H1 (cell line): ENCODE measurements at regions of chr17 and their contacts with region 1.

Region 1: DNA sequence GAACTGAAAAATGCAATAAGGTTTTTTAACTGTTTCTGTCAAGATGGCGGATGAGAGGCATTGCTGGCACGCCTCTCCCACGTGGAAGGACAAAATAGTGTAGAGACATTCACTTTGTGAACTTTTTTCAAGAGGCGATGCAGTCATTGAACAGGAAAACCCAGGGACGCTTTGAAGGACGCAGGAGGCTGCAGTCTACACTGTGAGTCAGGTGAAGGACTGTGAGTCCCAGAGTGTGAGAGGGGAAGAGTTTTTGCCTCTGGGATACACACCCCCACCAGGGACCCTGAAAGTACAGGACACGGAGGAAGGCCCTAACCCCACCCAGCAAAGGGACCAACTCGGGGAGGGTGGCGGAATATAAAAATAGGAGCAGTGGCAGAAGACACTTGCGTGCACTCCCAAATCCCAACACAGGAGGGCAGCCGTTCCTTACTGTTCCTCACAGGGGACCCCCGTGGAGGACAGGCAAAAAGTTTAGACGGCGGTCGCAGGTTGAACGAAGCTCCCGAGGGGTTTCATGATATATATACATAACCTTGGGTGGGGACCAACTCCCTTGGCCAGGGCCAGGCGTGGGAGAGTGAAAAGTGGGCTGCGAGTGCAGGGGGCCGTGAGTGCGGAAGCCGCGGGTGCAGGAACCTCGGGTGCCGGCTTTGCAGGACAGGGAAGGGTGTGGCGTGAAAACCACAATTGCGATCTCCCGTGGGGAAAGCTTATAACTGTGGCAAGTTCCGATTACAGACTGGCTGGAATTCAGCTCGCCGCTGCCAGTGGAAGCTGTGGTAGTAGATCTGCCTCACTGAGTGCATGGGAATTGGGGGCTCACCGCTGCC is 82.0 kb upstream of the ALOX12 start:
- DNase-seq: peak; percentile 34 to 88
- H3K4me3 ChIP-seq: no peak overlapping the region
- H3K27ac ChIP-seq: no peak overlapping the region
- H3K4me1 ChIP-seq: no peaks in the 10 kb centered on the region
- H3K27me3 ChIP-seq: no peaks in the 10 kb centered on the region; a peak in 2 of 7 replicates
- CTCF ChIP-seq: peak; percentile 68 to 81 (median 77)
- EP300 ChIP-seq: no peak
- POLR2A ChIP-seq: no peak
- RAD21 ChIP-seq: peak; percentile 90

Region 2: DNA sequence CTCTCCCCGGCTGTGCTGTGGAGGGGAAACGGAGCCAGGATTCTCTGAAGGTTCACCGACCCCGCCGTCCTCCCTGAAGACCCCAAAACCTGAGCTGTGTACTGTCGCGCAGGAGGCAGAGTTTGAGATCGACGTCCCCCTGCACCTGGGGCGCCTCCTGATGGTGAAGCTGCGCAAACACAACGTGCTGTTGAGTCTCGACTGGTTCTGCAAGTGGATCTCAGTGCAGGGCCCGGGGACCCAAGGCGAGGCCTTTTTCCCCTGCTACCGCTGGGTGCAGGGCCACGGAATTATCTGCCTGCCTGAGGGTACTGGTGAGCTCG is 19.7 kb before region 1 on chr17:
- CTCF ChIA-PET with region 1: interaction called, 16 read pairs
- POLR2A ChIA-PET with region 1: no interaction called
- DNase-seq: peak; percentile 34 to 90
- H3K4me3 ChIP-seq: peak overlapping the region; percentile 30 to 84 (median 64)
- H3K27ac ChIP-seq: no peak overlapping the region
- H3K4me1 ChIP-seq: peaks cover 0 to 5% (median 0%) of the 10 kb centered on the region in 4 experiments; a peak in 1 of 7 replicates
- H3K27me3 ChIP-seq: peaks cover 0 to 14% (median 8%) of the 10 kb centered on the region in 4 experiments; a peak in 5 of 7 replicates
- CTCF ChIP-seq: peak; percentile 89 to 98 (median 98)
- EP300 ChIP-seq: no peak; a peak in 1 of 3 replicates
- POLR2A ChIP-seq: no peak
- RAD21 ChIP-seq: peak; percentile 77 to 82

Region 3: DNA sequence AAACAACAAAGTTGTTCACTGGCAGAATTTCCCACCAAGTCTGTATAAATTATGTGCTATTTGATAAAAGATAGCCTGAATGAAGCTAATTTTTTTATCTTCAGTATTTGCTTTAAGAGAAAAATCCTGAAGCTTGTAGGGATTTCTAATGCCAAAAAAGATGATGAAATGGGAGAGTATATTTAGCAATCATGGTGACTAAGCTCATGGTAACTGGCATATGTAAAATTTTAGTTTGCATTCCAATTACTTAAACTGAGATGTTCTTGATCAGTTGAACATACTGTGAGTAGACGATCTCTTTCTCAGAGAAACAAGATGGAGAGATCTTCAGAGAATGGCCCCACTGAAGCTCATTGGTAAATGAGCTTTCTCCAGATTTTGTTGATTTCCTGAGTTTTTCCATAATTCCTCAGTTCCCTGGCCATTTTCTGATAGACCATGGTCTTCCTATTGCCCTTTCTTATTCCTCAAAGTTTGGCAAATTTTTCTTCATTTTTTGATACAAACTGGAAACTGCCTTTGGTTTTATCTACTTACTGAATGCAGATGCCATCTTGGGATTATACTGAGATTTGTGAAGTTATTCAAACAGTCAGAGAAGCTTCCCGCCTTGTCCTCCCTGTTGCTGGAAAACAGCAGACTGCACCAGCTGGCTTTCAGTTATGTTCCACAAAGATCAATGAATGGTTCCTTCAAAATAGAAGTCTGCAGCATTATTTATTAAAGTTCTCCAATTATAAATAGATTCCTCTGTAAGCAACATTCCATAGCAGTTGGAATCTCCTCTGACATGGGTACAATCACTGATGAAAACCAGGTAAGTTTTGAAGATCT is 13.7 kb after region 1 on chr17:
- CTCF ChIA-PET with region 1: interaction called, 15 read pairs
- POLR2A ChIA-PET with region 1: no interaction called
- DNase-seq: no peak
- H3K4me3 ChIP-seq: no peak overlapping the region
- H3K27ac ChIP-seq: no peak overlapping the region
- H3K4me1 ChIP-seq: no peaks in the 10 kb centered on the region
- H3K27me3 ChIP-seq: no peaks in the 10 kb centered on the region
- CTCF ChIP-seq: no peak
- EP300 ChIP-seq: no peak
- POLR2A ChIP-seq: no peak
- RAD21 ChIP-seq: no peak

Region 4: DNA sequence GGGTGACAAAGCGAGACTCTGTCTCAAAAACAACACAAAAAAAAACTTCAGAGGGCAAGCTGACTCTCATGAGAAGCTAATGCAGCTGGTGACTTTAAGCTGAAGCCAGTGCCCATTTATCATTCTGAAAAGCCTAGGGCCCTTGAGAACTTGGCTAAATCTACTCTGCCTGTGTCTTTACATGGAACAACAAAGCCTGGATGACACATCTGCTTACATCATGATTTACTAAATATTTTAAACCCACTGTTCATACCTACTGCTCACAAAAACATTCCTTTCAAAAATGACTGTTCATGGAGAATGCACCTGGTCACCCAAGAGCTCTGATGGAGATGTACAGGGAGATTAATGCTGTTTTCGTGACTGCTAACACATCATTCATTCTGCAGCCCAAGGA is 76.0 kb after region 1 on chr17:
- CTCF ChIA-PET with region 1: interaction called, 10 read pairs
- POLR2A ChIA-PET with region 1: no interaction called
- DNase-seq: no peak
- H3K4me3 ChIP-seq: no peak overlapping the region
- H3K27ac ChIP-seq: no peak overlapping the region
- H3K4me1 ChIP-seq: no peaks in the 10 kb centered on the region
- H3K27me3 ChIP-seq: peaks cover 0 to 15% (median 9%) of the 10 kb centered on the region in 4 experiments; a peak in 6 of 7 replicates
- CTCF ChIP-seq: no peak
- EP300 ChIP-seq: no peak
- POLR2A ChIP-seq: no peak
- RAD21 ChIP-seq: no peak

Region 5: GRCh38 chr17:6995431-6996255 is 81.8 kb after region 1 on chr17 and contains the start of gene ALOX12:
- CTCF ChIA-PET with region 1: interaction called, 152 read pairs
- POLR2A ChIA-PET with region 1: interaction called, 3 read pairs
- DNase-seq: peak in 1 of 2 experiments; percentile 77
- H3K4me3 ChIP-seq: peak within 1 kb of the TSS; percentile 37 to 66 (median 46)
- H3K27ac ChIP-seq: no peak within 1 kb of the TSS
- H3K4me1 ChIP-seq: peaks cover 0 to 9% (median 1%) of the 10 kb centered on the region in 4 experiments; a peak in 2 of 7 replicates
- H3K27me3 ChIP-seq: peaks cover 2 to 39% (median 25%) of the 10 kb centered on the region in 4 experiments
- CTCF ChIP-seq: no peak
- EP300 ChIP-seq: no peak
- POLR2A ChIP-seq: no peak
- RAD21 ChIP-seq: no peak
- total RNA-seq, gene ALOX12: 1.4 and 2.0 TPM in 2 replicates

Region 6: DNA sequence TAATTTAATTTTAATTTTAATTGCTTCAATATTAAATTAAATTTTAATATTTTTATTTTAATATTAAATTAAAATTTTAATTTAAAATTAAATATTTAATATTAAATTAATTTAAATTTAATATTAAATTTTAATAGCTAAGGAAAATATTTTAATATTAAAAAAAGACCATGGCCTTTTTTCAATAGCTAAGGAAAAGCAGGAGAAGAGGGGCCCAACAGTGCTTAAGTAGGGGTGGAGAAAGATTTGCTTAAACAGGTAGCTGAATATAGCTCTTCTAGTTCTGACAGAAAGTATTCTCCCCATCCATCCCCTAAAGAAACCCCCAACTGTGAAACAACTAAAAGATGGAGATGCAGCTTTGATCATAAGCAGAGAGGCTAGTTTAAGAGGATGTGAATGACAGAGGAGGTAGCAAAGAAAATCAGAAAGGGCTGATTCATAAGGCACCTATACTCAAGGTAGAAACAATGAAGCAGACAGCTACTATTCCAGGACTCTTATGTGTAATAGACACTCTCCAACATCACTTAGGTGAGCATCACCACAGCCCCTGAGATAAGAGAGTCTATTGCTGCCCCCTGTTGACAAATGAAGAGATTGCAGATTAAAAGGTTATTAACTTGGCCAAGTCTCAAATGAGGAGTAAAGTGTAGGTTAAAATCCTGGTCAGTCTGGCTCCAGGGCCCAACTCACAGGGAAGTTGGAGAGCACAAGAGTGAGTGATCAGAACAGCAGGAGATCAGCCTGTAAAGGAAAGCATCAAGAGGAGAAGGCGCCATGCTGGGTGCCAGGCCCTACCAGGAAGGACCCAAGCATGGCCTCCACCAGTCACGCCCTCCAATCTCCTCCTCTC is 90.8 kb after region 1 on chr17:
- CTCF ChIA-PET with region 1: interaction called, 152 read pairs
- POLR2A ChIA-PET with region 1: interaction called, 4 read pairs
- DNase-seq: peak in 1 of 2 experiments; percentile 53
- H3K4me3 ChIP-seq: no peak overlapping the region
- H3K27ac ChIP-seq: no peak overlapping the region
- H3K4me1 ChIP-seq: no peaks in the 10 kb centered on the region
- H3K27me3 ChIP-seq: no peaks in the 10 kb centered on the region
- CTCF ChIP-seq: peak in 2 of 3 experiments; percentile 70; a peak in 3 of 4 replicates
- EP300 ChIP-seq: no peak
- POLR2A ChIP-seq: no peak
- RAD21 ChIP-seq: peak; percentile 82 to 88